ENCODE measurements at regions of chr14 and their contacts with region 1.

Region 1: DNA sequence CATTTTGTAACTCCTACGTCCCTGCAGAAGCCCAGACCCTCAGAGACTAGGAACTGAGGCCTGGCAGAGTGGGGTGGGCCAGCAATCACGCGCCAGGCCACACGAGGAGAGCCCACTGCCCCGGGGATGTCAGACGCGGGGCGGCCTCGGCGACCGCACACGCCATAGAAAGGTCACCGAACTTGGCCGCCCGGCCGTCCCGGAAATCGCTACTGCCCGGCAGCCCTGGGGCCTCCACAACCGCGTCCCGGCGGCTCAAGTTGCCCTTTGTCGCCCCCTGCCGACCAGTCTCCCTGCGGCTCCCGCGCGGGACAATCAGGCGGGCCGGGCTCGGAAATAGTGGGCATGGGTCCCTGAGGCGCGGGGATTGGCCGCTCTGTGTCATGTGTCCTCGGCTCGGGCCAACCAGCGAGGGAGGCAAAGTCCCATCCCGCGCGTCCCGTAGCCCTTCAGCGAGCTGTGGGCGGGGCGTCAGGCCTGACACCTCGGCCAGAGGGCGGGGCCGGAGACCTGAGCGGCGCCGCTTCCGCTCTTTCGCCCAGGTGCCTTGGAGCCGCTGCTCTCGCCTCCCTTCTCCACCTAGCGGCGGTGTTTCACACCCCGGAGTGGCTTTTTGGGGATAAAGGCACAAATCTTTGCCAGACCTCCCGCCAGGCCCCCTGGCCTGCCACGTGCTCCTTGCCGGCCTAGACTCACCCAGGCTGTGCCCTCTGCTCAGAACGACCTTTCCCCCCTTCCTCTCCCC is 33.4 kb upstream of the DEGS2 start:
- DNase-seq: peak; percentile 100
- H3K4me3 Mint-ChIP-seq: peak overlapping the region; percentile 73
- H3K27ac Mint-ChIP-seq: peak overlapping the region; percentile 86
- H3K4me1 Mint-ChIP-seq: peaks cover 14% of the 10 kb centered on the region
- H3K27me3 Mint-ChIP-seq: no peaks in the 10 kb centered on the region

Region 2: DNA sequence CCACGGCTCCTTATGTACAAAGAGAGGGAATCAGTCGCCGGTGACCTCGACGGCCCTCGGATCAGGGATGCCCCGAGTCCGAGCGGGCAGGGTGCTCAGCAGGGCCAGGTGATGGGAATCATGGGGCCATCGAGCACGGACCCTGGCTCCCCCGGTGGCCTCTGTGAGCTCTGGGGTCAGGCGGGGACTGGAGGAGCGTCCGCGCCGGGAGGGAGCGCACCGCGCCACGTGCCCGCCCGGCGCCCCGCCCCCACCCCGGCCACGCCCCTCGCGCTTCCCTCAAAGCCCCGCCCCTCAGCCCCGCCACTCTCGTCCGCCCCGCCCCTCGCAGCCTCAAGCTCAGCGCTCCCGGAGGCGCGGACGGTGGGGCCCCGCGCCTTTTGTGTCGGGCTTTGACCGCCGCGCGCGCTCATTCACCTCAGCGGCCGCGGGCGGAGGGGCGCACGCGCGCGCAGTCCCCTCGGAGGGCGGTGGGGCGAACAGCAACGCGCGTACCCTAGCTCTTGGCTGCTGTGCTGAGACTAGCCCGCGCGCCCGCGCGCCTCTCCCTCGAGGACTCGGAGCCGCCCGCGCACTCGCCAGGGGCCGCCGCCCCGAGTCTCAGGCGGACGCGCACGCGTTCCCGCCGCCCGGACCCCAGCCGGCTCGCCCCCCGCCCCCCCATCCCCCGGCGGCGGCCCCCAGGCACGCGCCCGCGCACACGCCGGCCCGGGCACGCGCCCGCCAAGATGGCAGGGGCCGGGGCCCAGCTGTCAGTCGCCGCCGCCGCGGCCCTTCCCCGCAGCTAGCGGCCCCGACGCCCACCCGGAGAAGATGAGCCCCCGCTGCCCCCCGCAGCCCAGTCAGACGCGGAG is 221.5 kb before region 1 on chr14:
- CTCF ChIA-PET with region 1: interaction called, 11 read pairs
- POLR2A ChIA-PET with region 1: interaction called, 4 read pairs
- intact Hi-C with region 1: loop called (anchors 2 kb)
- DNase-seq: peak; percentile 89
- H3K4me3 Mint-ChIP-seq: peak overlapping the region; percentile 51
- H3K27ac Mint-ChIP-seq: no peak overlapping the region
- H3K4me1 Mint-ChIP-seq: peaks cover 20% of the 10 kb centered on the region
- H3K27me3 Mint-ChIP-seq: peaks cover 24% of the 10 kb centered on the region

Region 3: GRCh38 chr14:100062590-100062989 is 130.3 kb before region 1 on chr14:
- CTCF ChIA-PET with region 1: interaction called, 12 read pairs
- POLR2A ChIA-PET with region 1: interaction called, 8 read pairs
- intact Hi-C with region 1: loop called (anchors 2 kb)
- DNase-seq: peak; percentile 78
- H3K4me3 Mint-ChIP-seq: peak overlapping the region; percentile 69
- H3K27ac Mint-ChIP-seq: peak overlapping the region; percentile 98
- H3K4me1 Mint-ChIP-seq: peaks cover 80% of the 10 kb centered on the region
- H3K27me3 Mint-ChIP-seq: no peaks in the 10 kb centered on the region

Region 4: DNA sequence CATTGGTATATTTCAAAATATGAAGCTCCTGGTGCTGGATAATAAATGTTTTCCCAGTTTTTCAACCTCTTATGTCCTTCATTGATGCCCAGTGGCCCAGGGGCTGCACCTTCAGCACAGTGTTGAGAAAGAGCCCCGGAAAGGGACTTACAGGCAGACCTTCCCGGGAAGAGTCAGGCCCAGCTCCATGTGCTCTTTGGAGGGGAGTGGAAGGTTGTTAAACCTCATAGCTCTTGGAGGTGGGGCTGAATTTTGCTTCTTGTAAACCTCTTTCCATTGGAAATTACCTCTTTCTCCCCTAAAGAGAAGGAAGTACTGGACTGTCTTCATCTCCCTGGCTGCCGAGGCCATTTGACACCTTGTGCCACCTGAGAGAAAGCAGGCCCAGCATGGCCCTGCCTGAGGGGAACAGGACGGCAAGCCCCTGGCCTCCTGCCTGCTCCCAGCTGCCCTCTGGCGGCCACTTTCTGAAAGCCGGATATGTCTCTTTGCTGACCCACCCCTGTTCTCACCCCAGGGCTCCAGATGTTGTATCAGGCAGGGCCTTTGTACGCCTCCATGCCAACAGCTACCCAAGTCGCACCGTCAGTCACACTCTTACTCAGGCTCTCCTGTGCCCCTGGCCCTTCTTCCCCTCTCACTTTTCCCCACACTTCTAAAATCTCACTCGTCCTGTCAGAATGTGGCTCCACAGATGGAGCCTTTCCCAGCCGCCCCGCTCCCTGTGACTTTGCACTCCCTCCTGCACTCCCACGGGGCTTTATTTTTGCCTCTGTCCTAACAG is 84.6 kb before region 1 on chr14:
- CTCF ChIA-PET with region 1: interaction called, 44 read pairs
- POLR2A ChIA-PET with region 1: no interaction called
- intact Hi-C with region 1: loop called (anchors 1 kb)
- DNase-seq: peak; percentile 92
- H3K4me3 Mint-ChIP-seq: peak overlapping the region; percentile 4
- H3K27ac Mint-ChIP-seq: peak overlapping the region; percentile 90
- H3K4me1 Mint-ChIP-seq: peaks cover 62% of the 10 kb centered on the region
- H3K27me3 Mint-ChIP-seq: no peaks in the 10 kb centered on the region

Region 5: DNA sequence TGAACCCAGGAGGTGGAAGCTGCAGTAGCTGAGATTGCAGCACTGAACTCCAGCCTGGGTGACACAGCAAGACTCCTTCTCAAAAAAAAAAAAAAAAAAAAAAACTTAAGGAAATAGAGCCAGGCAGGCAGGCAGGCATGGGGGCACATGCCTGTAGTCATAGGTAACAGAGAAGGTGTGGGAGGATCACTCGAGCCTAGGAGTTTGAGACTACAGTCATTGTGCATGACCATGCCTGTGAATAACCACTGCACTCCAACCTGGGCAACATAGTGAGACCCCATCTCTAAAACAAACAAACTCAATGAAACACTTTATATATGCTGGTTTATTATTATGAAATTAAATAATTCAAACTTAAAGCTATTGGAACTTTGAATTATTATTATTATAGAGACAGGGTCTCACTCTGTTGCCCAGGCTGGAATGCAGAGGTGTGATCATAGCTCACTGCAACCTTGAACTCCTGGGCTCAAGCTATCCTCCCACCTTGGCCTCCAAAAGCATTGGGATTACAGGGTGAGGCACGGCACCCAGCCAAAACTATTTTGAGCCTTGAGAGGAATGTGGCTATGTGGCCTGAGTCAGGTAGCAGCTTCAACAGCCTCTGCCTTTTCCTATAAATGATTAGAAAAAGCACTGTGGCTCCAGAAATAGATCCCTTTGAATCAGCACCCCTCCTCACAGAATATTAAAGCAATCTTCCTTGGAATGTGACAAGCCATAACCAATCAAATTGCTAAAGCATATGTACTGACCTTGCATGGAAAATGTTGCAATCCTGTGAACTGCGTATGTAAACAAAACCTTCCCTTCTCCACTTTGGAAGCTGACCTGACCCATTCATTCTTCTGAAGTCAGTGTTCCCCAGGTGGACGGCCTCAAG is 11.3 kb after region 1 on chr14:
- CTCF ChIA-PET with region 1: interaction called, 17 read pairs
- POLR2A ChIA-PET with region 1: no interaction called
- intact Hi-C with region 1: no loop called
- DNase-seq: no peak
- H3K4me3 Mint-ChIP-seq: no peak overlapping the region
- H3K27ac Mint-ChIP-seq: no peak overlapping the region
- H3K4me1 Mint-ChIP-seq: no peaks in the 10 kb centered on the region
- H3K27me3 Mint-ChIP-seq: peaks cover 2% of the 10 kb centered on the region

Region 6: GRCh38 chr14:100234511-100234910 is 41.7 kb after region 1 on chr14:
- CTCF ChIA-PET with region 1: interaction called, 22 read pairs
- POLR2A ChIA-PET with region 1: no interaction called
- intact Hi-C with region 1: loop called (anchors 2 kb)
- DNase-seq: no peak
- H3K4me3 Mint-ChIP-seq: no peak overlapping the region
- H3K27ac Mint-ChIP-seq: peak overlapping the region; percentile 9
- H3K4me1 Mint-ChIP-seq: peaks cover 46% of the 10 kb centered on the region
- H3K27me3 Mint-ChIP-seq: peaks cover 2% of the 10 kb centered on the region

Region 7: GRCh38 chr14:100540141-100540925 is 347.5 kb after region 1 on chr14:
- CTCF ChIA-PET with region 1: no interaction called
- POLR2A ChIA-PET with region 1: no interaction called
- intact Hi-C with region 1: no loop called
- DNase-seq: no peak
- H3K4me3 Mint-ChIP-seq: no peak overlapping the region
- H3K27ac Mint-ChIP-seq: no peak overlapping the region
- H3K4me1 Mint-ChIP-seq: no peaks in the 10 kb centered on the region
- H3K27me3 Mint-ChIP-seq: no peaks in the 10 kb centered on the region